ENCODE measurements at regions of chr5 and their contacts with region 1.

Region 1: GRCh38 chr5:177403792-177404640 is 3.6 kb upstream of the PFN3 start:
- DNase-seq: peak; percentile 75
- ATAC-seq: peak; percentile 26
- H3K4me3 Mint-ChIP-seq: peak overlapping the region; percentile 84
- H3K27ac Mint-ChIP-seq: no peak overlapping the region
- H3K4me1 Mint-ChIP-seq: peaks cover 9% of the 10 kb centered on the region
- H3K27me3 Mint-ChIP-seq: peaks cover 83% of the 10 kb centered on the region
- CTCF ChIP-seq: no peak

Region 2: DNA sequence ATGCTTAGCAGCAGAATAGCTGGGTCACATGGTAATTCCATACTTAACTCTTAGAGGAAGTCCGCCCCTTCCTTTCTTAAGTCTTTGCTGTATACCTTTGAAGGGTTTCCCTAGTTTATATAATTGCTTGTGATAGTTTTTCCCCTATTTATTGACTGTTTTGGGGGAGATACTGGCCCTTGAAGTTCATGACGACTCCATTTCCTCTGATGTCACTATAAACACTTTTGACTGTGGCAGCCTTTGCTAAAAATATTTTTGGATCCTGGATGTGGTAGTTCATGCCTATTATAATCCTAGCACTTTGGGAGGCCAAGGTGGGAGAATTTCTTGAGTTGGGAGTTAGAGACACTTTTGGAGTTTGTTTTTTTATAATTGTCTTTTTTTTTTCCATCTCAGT is 232.1 kb before region 1 on chr5:
- CTCF ChIA-PET with region 1: no interaction called
- POLR2A ChIA-PET with region 1: no interaction called
- DNase-seq: no peak
- ATAC-seq: no peak
- H3K4me3 Mint-ChIP-seq: no peak overlapping the region
- H3K27ac Mint-ChIP-seq: peak overlapping the region; percentile 66
- H3K4me1 Mint-ChIP-seq: peaks cover 19% of the 10 kb centered on the region
- H3K27me3 Mint-ChIP-seq: no peaks in the 10 kb centered on the region
- CTCF ChIP-seq: no peak

Region 3: GRCh38 chr5:177362610-177363507 is 41.2 kb before region 1 on chr5:
- CTCF ChIA-PET with region 1: interaction called, 48 read pairs
- POLR2A ChIA-PET with region 1: interaction called, 4 read pairs
- DNase-seq: peak; percentile 76
- ATAC-seq: peak; percentile 39
- H3K4me3 Mint-ChIP-seq: peak overlapping the region; percentile 76
- H3K27ac Mint-ChIP-seq: peak overlapping the region; percentile 74; the same call in 1 of the 2 replicates
- H3K4me1 Mint-ChIP-seq: peaks cover 40% of the 10 kb centered on the region
- H3K27me3 Mint-ChIP-seq: peaks cover 14% of the 10 kb centered on the region
- CTCF ChIP-seq: no peak

Region 4: DNA sequence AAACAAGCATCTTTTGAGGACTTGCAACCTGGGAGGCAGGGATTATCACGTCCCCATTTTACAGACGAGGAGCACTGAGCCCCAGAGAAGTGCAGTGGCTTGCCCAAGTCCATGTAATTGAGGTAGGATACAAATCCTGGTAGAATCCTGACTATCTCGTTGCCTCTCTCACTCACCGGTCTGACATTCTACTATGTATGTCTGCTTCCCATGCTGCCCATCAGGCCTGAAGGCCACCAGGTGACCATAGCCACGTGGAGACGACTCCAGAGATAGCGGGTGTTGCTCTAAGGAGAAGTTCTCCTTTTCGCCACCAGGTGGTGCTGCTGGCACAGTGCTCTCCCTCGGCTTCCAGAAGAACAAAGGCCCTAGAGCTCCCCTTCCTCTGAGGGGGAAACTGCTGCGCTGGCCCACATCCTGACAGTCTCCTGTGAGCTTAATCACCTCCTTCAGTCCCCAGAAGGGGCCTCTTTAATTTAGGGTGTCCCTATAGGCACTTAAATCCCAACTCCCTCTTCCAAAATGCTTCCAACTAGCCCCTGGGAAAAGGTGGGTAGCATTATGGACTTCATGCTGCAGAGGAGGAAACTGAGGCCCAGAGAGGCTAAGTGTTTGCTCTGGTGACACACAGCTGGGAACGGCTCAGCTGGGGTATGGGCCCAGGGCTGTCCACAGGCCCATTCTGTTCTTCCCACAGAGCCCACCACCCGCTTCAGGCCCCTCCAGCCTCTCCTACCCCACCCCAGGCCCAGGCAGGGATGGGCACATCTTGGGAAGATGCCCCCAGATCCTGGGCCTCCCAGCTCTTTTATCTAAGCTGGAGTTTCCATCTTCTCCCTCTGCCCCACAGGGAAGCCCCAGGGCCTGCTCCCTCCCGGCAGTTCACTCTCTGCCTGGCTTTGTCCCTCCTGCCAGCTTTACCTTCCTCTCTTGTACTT is 13.4 kb before region 1 on chr5:
- CTCF ChIA-PET with region 1: interaction called, 202 read pairs
- POLR2A ChIA-PET with region 1: interaction called, 8 read pairs
- DNase-seq: peak; percentile 93
- ATAC-seq: peak; percentile 88
- H3K4me3 Mint-ChIP-seq: no peak overlapping the region
- H3K27ac Mint-ChIP-seq: no peak overlapping the region
- H3K4me1 Mint-ChIP-seq: peaks cover 32% of the 10 kb centered on the region
- H3K27me3 Mint-ChIP-seq: peaks cover 31% of the 10 kb centered on the region
- CTCF ChIP-seq: peak; percentile 98

Region 5: GRCh38 chr5:177425801-177426565 is 22.0 kb after region 1 on chr5:
- CTCF ChIA-PET with region 1: interaction called, 95 read pairs
- POLR2A ChIA-PET with region 1: interaction called, 10 read pairs
- DNase-seq: peak; percentile 100
- ATAC-seq: peak; percentile 94
- H3K4me3 Mint-ChIP-seq: peak overlapping the region; percentile 84
- H3K27ac Mint-ChIP-seq: peak overlapping the region; percentile 98
- H3K4me1 Mint-ChIP-seq: peaks cover 18% of the 10 kb centered on the region
- H3K27me3 Mint-ChIP-seq: peaks cover 5% of the 10 kb centered on the region
- CTCF ChIP-seq: no peak

Region 6: GRCh38 chr5:177497292-177498033 is 93.4 kb after region 1 on chr5 and contains the start of gene PDLIM7:
- CTCF ChIA-PET with region 1: interaction called, 12 read pairs
- POLR2A ChIA-PET with region 1: no interaction called
- DNase-seq: peak; percentile 97
- ATAC-seq: peak; percentile 71
- H3K4me3 Mint-ChIP-seq: peak within 1 kb of the TSS; percentile 80
- H3K27ac Mint-ChIP-seq: peak within 1 kb of the TSS; percentile 92; the same call in 1 of the 2 replicates
- H3K4me1 Mint-ChIP-seq: peaks cover 36% of the 10 kb centered on the region
- H3K27me3 Mint-ChIP-seq: peaks cover 31% of the 10 kb centered on the region
- CTCF ChIP-seq: no peak
- total RNA-seq, gene PDLIM7: 124 to 142 TPM (median 139 TPM) in 3 replicates

Region 7: DNA sequence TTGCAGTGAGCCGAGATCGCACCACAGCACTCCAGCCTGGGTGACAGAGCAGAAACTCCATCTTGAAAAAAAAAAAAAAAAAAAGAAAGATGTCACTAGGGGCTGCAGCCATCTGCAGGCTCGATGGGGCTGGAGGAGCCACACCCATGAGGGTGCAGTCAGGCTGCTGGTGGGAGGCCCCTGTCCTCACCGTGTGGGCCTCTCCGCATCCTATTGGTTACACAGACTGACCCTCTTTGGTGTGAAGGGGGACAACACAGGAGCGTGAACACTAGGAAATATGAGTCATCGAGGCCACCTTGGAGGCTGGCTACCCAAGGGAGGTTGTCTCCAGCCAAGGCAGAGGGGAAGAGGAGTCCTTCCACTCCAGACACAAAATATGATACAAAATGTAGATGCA is 164.3 kb after region 1 on chr5:
- CTCF ChIA-PET with region 1: no interaction called
- POLR2A ChIA-PET with region 1: no interaction called
- DNase-seq: no peak
- ATAC-seq: peak; percentile 46; the same call in 1 of the 2 replicates
- H3K4me3 Mint-ChIP-seq: no peak overlapping the region
- H3K27ac Mint-ChIP-seq: no peak overlapping the region
- H3K4me1 Mint-ChIP-seq: peaks cover 2% of the 10 kb centered on the region; the same call in 1 of the 2 replicates
- H3K27me3 Mint-ChIP-seq: peaks cover 37% of the 10 kb centered on the region
- CTCF ChIP-seq: no peak